Ascending aorta (tissue), 2 donors: ENCODE measurements at regions of chr20 and their contacts with region 1.

Region 1: DNA sequence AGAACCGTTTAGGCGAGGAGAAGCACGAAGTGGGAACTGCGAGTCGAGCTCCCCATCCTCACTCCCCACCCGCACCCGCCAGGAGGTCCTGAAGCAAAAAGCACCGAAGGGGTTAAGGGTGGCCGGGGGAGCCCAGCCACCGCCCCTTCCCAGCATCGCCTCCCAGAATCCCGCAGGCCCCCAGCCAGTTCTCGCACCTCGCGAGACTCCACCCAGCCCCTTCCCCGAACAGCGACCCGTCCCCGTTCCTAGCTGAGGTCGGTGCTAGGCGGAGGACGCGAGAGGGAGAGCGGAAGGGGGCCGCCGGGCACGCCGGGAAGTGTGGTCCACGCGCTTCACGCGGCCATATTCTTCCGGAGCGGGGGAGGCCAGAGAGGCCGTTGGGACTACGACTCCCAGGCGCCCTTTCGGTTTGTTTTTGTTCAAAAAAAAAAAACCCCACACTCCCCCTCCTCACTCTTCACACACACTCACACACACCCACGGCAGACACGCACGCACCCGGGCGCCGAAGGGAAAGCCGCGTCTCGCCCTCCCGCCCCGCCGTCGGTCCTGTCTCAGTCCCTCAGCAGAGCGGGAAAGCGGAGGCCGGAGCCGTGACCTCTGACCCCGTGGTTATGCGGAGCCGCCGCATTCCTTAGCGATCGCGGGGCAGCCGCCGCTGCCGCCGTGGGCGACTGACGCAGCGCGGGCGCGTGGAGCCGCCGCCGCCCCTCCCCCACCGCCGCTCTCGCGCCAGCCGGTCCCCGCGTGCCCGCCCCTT is at the start of gene ASXL1:
- DNase-seq: peak; percentile 84 to 98
- H3K4me3 ChIP-seq: peak within 1 kb of the TSS; percentile 70 to 77
- H3K27ac ChIP-seq: peak within 1 kb of the TSS; percentile 96
- H3K4me1 ChIP-seq: peaks cover 0 to 19% of the 10 kb centered on the region in 2 donors
- H3K27me3 ChIP-seq: no peaks in the 10 kb centered on the region
- CTCF ChIP-seq: no peak
- total RNA-seq, gene ASXL1: 37.4 TPM

Region 2: DNA sequence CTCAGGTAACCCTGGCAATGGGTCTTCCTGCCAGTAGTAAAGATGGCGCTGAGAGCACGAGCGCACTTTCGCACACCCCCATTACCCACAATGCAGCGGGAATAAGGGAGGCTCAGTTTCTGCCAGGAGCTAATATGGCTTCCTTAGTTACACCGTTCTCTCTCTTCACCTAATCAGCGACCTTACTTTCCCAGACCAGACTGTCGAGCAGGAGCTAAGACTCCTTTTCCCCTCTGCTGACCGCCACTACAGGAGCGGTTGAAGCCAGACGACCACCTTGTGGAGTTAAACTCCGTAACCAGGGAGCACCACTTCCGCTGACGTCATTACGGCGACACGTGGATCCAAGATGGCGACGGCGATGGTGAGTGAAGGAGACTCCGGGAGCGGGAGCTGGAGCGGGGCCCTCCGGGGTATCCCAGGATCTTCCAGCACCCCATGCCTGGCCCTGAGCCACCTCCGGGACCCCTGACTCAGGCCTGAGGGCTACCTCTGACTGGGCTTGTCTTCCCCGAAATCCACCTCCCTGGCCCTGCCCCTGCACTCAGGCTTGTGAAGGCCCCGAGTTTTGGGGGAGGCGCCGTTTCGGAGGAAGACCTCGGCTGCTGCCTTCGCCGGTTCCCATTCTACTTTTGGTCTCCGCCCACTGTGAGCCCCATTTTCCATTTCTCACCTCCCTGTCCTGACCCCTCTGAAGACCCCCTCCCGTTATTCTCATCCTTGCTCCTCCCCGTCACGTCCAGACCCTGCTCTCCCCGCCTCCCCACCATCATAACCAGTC is 248.5 kb before region 1 on chr20 and contains the start of gene TM9SF4:
- intact Hi-C with region 1: loop called (anchors 2 kb)
- DNase-seq: peak; percentile 51 to 94
- H3K4me3 ChIP-seq: peak within 1 kb of the TSS; percentile 88 to 93
- H3K27ac ChIP-seq: peak within 1 kb of the TSS; percentile 99 to 100
- H3K4me1 ChIP-seq: peaks cover 8 to 20% of the 10 kb centered on the region in 2 donors
- H3K27me3 ChIP-seq: no peaks in the 10 kb centered on the region
- CTCF ChIP-seq: no peak
- total RNA-seq, gene TM9SF4: 29.2 TPM

Region 3: GRCh38 chr20:32484958-32485769 is 127.1 kb after region 1 on chr20:
- intact Hi-C with region 1: loop called (anchors 2 kb)
- DNase-seq: peak; percentile 51 to 87
- H3K4me3 ChIP-seq: peak overlapping the region; percentile 88 to 96
- H3K27ac ChIP-seq: peak overlapping the region; percentile 55 to 64
- H3K4me1 ChIP-seq: peaks cover 0 to 11% of the 10 kb centered on the region in 2 donors
- H3K27me3 ChIP-seq: no peaks in the 10 kb centered on the region
- CTCF ChIP-seq: peak; percentile 69 to 81 (median 74)